AG04449 (cell line): ENCODE measurements at regions of chr6 and their contacts with region 1.

Region 1: DNA sequence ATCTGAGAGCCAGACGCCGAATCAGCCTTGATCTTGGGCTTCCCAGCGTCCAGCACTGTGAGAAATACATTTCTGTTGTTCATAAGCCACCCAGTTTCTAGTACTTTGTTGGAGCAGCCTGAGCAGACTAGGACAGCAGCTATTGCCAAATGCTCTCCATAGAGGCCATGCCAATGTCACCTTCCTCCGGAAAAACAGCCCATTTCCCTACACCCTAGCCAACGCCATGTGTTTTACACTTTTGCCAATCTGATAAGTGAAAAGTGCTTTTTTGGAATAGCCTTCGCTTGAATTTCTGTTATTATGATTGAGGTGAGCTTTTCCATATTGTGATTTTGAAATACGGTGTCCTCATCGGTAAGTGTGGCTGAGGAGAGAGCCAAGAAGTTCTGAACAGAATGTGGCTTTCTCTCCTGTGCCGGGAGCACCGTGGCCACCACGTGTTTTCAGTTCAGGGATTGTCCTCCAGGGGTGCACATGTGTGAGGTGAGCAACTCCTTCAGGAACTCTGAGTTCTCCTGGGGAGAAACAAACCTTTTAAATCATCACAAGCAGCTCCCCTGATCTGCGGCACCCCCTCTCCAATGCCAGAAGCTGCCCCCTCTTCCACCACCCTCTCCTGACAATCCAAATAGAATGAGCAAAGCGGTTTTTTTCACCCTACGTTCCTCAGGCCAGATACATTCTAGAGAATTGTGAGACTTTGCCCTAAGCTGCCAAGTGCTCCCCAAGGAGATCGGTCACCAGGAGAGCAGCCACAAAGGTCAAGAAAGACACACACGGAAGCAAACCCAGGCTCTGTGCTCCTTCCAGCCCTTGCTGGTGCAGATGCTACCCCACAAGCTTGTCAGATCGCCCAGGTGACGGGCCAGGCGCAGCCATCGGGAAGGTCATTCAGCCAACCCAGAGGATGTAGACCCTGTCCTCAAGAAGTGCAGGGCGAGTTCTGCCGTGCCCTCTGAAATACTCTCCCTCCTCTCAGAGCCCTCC is 36.0 kb downstream of the TAF8 start:
- DNase-seq: no peak
- H3K4me3 ChIP-seq: no peak overlapping the region
- CTCF ChIP-seq: peak; percentile 2

Region 2: DNA sequence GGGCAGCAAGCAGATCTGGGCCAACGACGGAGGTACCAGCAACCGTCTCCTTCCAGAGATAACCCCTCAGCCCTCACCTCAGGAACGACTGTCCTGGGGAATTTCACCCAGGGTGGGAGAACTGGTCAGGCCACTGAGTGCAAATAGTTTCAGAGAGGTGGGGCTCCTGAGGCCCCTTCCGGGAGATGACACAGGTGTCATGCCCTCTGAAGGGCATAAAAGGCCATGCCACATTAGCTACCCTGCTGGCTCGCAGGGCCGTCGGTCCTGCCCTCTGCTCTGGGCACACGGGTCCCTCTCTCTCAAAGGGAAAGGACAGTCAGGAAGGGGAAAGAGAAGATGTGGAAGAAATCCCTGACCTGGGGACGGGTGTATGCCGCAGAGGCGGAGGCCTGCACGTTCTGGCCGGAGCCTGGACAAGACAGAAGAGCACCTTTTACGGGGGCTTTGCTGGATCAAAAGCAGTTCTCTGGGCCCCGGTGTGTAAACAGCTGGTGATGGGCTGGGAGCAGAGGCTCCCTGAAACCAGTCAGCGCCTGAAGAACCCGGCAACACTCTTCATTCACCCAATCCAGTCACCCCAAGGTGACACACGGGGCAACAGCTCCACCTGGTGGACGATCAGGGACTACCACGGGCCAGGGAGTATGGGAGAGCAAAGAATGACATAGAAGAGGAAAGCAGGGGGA is 42.4 kb before region 1 on chr6:
- CTCF ChIA-PET with region 1: no interaction called
- POLR2A ChIA-PET with region 1: no interaction called
- DNase-seq: no peak
- H3K4me3 ChIP-seq: no peak overlapping the region; the same call in 1 of the 2 replicates
- CTCF ChIP-seq: peak; percentile 94

Region 3: GRCh38 chr6:42059743-42060142 is 26.6 kb before region 1 on chr6:
- CTCF ChIA-PET with region 1: no interaction called
- POLR2A ChIA-PET with region 1: no interaction called
- DNase-seq: no peak
- H3K4me3 ChIP-seq: no peak overlapping the region
- CTCF ChIP-seq: no peak

Region 4: GRCh38 chr6:42075159-42075838 is 11.0 kb before region 1 on chr6:
- CTCF ChIA-PET with region 1: interaction called, 117 read pairs
- POLR2A ChIA-PET with region 1: no interaction called
- DNase-seq: no peak
- H3K4me3 ChIP-seq: no peak overlapping the region
- CTCF ChIP-seq: peak; percentile 79

Region 5: GRCh38 chr6:42211726-42212125 is 125.4 kb after region 1 on chr6:
- CTCF ChIA-PET with region 1: interaction called, 38 read pairs
- POLR2A ChIA-PET with region 1: no interaction called
- DNase-seq: no peak
- H3K4me3 ChIP-seq: no peak overlapping the region
- CTCF ChIP-seq: no peak